AG04450 (cell line): ENCODE measurements at regions of chr5 and their contacts with region 1.

Region 1: DNA sequence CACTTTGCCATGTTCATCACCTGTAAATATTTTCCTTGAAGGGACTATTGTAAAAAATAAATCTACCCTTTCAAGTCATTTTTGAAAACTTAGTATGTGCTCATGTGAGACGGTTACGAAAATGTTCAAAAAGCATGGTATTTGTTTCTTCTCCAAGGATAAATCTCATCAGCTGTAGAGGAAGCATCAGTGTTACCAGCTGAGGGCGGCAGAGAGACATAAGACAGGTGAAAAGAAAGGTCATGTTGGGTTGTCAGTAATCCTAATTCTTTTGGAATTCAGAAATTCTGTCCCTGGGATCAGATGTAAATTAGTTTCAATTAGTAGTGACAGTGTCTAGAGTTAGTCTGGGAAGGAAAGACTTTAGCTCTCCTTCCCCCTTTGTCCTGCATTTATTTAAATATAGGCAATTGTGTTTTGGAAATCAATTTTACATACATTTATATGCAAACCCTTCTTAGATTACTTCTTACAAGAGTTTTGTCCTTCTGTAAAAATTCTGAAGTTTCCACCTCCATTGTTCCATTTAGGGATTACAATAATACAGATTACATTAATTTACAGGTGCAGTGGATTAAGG is 791.9 kb upstream of the CDH6 start:
- DNase-seq: peak; percentile 7
- H3K4me3 ChIP-seq: no peak overlapping the region
- H3K27ac ChIP-seq: no peak overlapping the region
- H3K27me3 ChIP-seq: no peaks in the 10 kb centered on the region
- CTCF ChIP-seq: peak; percentile 66

Region 2: DNA sequence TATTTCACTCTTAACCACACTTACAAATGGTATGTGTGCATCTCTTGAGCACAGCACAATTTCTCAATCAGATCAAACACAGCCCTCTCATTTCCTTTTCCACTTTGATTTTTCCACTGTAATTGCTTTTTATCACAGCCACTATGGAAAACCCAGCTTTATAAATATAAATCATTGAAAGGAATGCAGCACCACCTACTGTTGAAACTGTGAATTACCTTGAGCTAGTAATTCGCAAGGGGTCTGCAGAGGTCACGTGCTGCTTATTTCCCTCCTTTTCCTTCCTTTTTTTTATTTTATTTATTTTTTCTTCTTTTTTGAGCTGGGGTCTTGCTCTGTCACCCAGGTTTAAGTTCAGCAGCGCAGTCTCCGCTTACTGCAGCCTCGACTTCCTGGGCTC is 868.8 kb after region 1 on chr5:
- CTCF ChIA-PET with region 1: interaction called, 11 read pairs
- POLR2A ChIA-PET with region 1: no interaction called
- DNase-seq: no peak
- H3K4me3 ChIP-seq: no peak overlapping the region
- H3K27ac ChIP-seq: no peak overlapping the region
- H3K27me3 ChIP-seq: no peaks in the 10 kb centered on the region
- CTCF ChIP-seq: peak; percentile 55